MCF 10A (cell line): ENCODE measurements at regions of chr6 and their contacts with region 1.

Region 1: GRCh38 chr6:46848684-46849360 is 55.6 kb downstream of the MEP1A start:
- DNase-seq: peak; percentile 78
- H3K4me3 Mint-ChIP-seq: no peak overlapping the region
- H3K27ac Mint-ChIP-seq: no peak overlapping the region
- H3K4me1 Mint-ChIP-seq: peaks cover 6% of the 10 kb centered on the region
- H3K27me3 Mint-ChIP-seq: no peaks in the 10 kb centered on the region
- CTCF ChIP-seq: peak; percentile 98

Region 2: GRCh38 chr6:46419576-46420002 is 429.2 kb before region 1 on chr6:
- CTCF ChIA-PET with region 1: interaction called, 4 read pairs
- POLR2A ChIA-PET with region 1: no interaction called
- intact Hi-C with region 1: loop called (anchors 5 kb)
- DNase-seq: peak; percentile 78
- H3K4me3 Mint-ChIP-seq: no peak overlapping the region
- H3K27ac Mint-ChIP-seq: no peak overlapping the region
- H3K4me1 Mint-ChIP-seq: peaks cover 7% of the 10 kb centered on the region
- H3K27me3 Mint-ChIP-seq: peaks cover 11% of the 10 kb centered on the region
- CTCF ChIP-seq: peak; percentile 73

Region 3: DNA sequence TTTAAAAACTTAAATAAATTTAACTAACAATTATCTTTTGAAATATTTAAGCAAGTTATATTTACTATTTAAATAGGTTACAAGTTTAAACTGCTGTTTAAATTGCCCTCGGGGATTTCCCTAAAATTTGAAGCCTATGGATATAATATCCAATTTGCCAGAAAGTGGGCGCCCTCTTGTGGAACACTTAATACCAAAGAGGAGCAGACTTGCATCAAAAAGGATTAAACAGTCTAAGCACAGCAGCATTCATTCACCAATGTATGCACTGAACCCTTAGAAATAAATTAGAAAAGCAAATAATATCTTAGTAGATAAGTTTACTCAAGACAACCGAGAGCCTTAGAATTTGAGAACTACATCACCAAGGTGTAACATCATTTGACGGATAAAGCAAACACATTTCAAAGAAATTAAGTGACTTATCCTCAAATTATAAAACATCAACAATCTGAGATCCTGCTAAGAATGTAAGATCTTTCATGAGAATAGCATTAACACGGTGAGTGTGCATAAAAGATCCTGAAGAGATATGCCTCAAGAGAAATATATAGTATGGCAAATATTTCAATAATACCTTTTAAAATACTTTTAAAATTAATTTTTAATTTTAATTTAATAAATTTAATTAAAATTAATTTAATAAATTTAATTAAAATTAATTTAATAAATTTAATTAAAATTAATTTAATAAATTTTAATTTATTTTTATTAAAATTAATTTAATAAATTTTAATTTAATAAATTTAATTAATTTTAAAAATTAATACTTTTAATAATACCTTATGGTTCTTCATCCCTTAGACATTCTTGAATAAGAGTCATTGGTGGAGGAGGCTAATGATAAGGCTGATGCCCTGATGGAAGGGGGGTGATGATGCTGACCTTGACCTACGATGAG is 67.1 kb before region 1 on chr6:
- CTCF ChIA-PET with region 1: interaction called, 5 read pairs
- POLR2A ChIA-PET with region 1: no interaction called
- intact Hi-C with region 1: loop called (anchors 2 kb)
- DNase-seq: peak; percentile 78
- H3K4me3 Mint-ChIP-seq: no peak overlapping the region
- H3K27ac Mint-ChIP-seq: no peak overlapping the region
- H3K4me1 Mint-ChIP-seq: no peaks in the 10 kb centered on the region
- H3K27me3 Mint-ChIP-seq: peaks cover 10% of the 10 kb centered on the region
- CTCF ChIP-seq: peak; percentile 53

Region 4: GRCh38 chr6:46993846-46994245 is 145.0 kb after region 1 on chr6:
- CTCF ChIA-PET with region 1: interaction called, 59 read pairs
- POLR2A ChIA-PET with region 1: interaction called, 6 read pairs
- intact Hi-C with region 1: loop called (anchors 1 kb)
- DNase-seq: peak; percentile 81
- H3K4me3 Mint-ChIP-seq: no peak overlapping the region
- H3K27ac Mint-ChIP-seq: peak overlapping the region; percentile 82
- H3K4me1 Mint-ChIP-seq: peaks cover 34% of the 10 kb centered on the region
- H3K27me3 Mint-ChIP-seq: no peaks in the 10 kb centered on the region
- CTCF ChIP-seq: no peak

Region 5: DNA sequence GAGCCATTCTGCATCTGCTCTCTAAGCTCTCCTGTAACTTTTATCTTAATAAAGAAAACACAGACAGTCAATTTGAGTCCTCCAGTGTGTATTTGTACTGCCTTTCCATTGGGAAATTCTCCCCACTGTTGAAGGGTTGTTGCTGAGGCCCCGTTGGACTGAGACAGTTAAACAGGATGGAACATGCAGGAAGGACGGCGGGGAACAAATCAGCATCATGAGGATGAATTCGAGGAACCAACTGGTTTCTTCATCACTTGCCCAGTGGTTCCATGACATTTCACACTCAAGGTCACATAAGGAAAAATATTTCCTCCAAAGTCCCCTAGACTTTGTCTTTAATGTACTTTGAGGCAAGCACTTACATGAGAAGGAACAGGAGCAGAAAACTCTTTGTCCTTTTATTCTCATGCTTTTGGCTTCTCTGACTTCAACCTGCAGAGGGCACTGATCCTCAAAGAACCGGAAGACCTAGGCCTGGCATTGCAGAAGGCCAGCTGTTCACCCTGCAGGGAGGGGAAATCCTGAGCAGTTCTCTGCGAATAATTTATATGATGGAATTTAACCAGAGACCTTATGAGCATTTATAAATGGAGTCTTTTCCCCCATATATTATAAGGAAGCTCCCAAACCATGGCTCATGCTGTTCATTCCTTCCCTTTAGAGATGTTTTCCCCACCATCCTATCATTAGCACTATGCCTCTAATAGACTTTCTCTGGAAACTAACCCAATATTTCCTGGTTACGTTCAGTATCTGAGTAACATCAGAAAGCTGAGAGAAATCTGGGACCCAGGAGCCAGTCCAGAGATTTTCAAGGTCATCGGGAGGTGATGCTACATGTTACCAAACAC is 248.5 kb after region 1 on chr6:
- CTCF ChIA-PET with region 1: interaction called, 5 read pairs
- POLR2A ChIA-PET with region 1: no interaction called
- intact Hi-C with region 1: loop called (anchors 2 kb)
- DNase-seq: peak; percentile 87
- H3K4me3 Mint-ChIP-seq: no peak overlapping the region
- H3K27ac Mint-ChIP-seq: no peak overlapping the region
- H3K4me1 Mint-ChIP-seq: peaks cover 18% of the 10 kb centered on the region
- H3K27me3 Mint-ChIP-seq: no peaks in the 10 kb centered on the region
- CTCF ChIP-seq: peak; percentile 77